Activated CD4-positive, alpha-beta T cell treated with anti-CD3 and anti-CD28 coated beads for 36 hours (primary cell): ENCODE measurements at regions of chr16 and their contacts with region 1.

Region 1: GRCh38 chr16:78778101-78779004 is 678.9 kb downstream of the WWOX start:
- DNase-seq: peak; percentile 77
- ATAC-seq: peak; percentile 66
- H3K4me3 Mint-ChIP-seq: peak overlapping the region; percentile 41
- H3K27ac Mint-ChIP-seq: peak overlapping the region; percentile 94
- H3K4me1 Mint-ChIP-seq: peaks cover 70% of the 10 kb centered on the region
- H3K27me3 Mint-ChIP-seq: no peaks in the 10 kb centered on the region

Region 2: DNA sequence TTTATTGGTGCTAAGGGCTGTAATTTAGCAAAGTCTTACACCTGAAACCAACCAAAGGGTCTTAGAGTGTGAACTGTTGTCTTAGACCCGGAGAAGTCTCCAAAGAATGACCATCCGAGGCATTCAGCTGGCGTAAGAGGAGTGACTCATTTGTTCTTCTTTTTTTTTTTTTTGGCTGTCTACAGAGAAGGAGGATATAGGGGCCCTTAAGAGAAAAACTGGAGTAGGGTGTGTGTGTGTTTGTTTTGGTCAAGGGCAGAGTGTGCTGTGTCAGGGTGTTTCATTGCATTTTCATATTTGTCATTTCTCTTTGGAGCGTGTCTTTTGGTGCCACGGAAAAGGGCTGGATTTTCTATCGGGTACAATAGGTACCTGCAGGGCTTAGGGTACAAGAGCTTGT is 170.9 kb before region 1 on chr16:
- CTCF ChIA-PET with region 1: no interaction called
- POLR2A ChIA-PET with region 1: no interaction called
- intact Hi-C with region 1: no loop called
- DNase-seq: no peak
- ATAC-seq: no peak
- H3K4me3 Mint-ChIP-seq: no peak overlapping the region
- H3K27ac Mint-ChIP-seq: no peak overlapping the region
- H3K4me1 Mint-ChIP-seq: peaks cover 4% of the 10 kb centered on the region
- H3K27me3 Mint-ChIP-seq: no peaks in the 10 kb centered on the region

Region 3: DNA sequence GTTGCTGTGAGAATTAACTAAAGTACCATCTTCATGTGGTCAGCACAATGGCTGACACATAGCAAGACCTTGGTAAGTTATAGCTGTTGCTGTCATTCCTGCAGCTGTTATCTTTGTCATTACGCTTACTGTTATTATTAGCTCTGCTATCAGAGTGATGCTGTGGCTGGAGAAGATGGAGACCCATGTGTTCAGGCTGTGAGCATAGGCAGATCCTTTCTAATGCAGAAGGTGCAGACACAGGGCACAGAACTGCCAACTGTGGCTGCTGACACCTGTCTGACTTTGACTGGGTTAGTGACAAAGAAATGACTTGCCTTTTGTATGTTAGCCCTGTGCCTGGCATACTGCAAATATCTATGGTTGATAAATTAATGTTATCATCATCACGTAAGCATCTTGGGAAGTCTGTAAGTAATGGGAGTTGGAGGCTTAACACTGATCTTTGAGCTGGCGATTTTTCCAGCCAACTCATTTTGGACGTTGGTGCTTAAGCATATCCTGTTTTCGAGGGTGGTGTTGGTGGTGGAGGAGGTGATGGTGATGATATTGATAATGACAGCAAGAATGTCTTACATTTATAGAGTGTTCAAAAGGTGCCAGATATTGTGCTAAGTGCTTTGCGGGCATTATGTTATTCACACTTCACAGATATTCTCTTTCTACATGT is 16.4 kb after region 1 on chr16:
- CTCF ChIA-PET with region 1: interaction called, 6 read pairs
- POLR2A ChIA-PET with region 1: interaction called, 8 read pairs
- intact Hi-C with region 1: loop called (anchors 1 kb)
- DNase-seq: peak; percentile 24
- ATAC-seq: peak; percentile 24
- H3K4me3 Mint-ChIP-seq: no peak overlapping the region
- H3K27ac Mint-ChIP-seq: peak overlapping the region; percentile 27
- H3K4me1 Mint-ChIP-seq: peaks cover 30% of the 10 kb centered on the region
- H3K27me3 Mint-ChIP-seq: no peaks in the 10 kb centered on the region

Region 4: GRCh38 chr16:78900044-78900811 is 121.9 kb after region 1 on chr16:
- CTCF ChIA-PET with region 1: interaction called, 8 read pairs
- POLR2A ChIA-PET with region 1: interaction called, 15 read pairs
- intact Hi-C with region 1: loop called (anchors 1 kb)
- DNase-seq: no peak
- ATAC-seq: peak; percentile 55
- H3K4me3 Mint-ChIP-seq: no peak overlapping the region
- H3K27ac Mint-ChIP-seq: peak overlapping the region; percentile 80
- H3K4me1 Mint-ChIP-seq: peaks cover 52% of the 10 kb centered on the region
- H3K27me3 Mint-ChIP-seq: no peaks in the 10 kb centered on the region

Region 5: GRCh38 chr16:79008036-79008868 is 229.9 kb after region 1 on chr16:
- CTCF ChIA-PET with region 1: interaction called, 3 read pairs
- POLR2A ChIA-PET with region 1: interaction called, 4 read pairs
- intact Hi-C with region 1: loop called in 1 of 2 experiments (anchors 1 kb)
- DNase-seq: peak; percentile 49
- ATAC-seq: peak; percentile 76
- H3K4me3 Mint-ChIP-seq: no peak overlapping the region
- H3K27ac Mint-ChIP-seq: peak overlapping the region; percentile 79
- H3K4me1 Mint-ChIP-seq: peaks cover 35% of the 10 kb centered on the region
- H3K27me3 Mint-ChIP-seq: no peaks in the 10 kb centered on the region

Region 6: GRCh38 chr16:79089735-79090284 is 311.5 kb after region 1 on chr16:
- CTCF ChIA-PET with region 1: no interaction called
- POLR2A ChIA-PET with region 1: no interaction called
- intact Hi-C with region 1: loop called in 1 of 2 experiments (anchors 5 kb)
- DNase-seq: peak; percentile 82
- ATAC-seq: peak; percentile 70
- H3K4me3 Mint-ChIP-seq: peak overlapping the region; percentile 66
- H3K27ac Mint-ChIP-seq: peak overlapping the region; percentile 95
- H3K4me1 Mint-ChIP-seq: peaks cover 57% of the 10 kb centered on the region
- H3K27me3 Mint-ChIP-seq: no peaks in the 10 kb centered on the region

Region 7: DNA sequence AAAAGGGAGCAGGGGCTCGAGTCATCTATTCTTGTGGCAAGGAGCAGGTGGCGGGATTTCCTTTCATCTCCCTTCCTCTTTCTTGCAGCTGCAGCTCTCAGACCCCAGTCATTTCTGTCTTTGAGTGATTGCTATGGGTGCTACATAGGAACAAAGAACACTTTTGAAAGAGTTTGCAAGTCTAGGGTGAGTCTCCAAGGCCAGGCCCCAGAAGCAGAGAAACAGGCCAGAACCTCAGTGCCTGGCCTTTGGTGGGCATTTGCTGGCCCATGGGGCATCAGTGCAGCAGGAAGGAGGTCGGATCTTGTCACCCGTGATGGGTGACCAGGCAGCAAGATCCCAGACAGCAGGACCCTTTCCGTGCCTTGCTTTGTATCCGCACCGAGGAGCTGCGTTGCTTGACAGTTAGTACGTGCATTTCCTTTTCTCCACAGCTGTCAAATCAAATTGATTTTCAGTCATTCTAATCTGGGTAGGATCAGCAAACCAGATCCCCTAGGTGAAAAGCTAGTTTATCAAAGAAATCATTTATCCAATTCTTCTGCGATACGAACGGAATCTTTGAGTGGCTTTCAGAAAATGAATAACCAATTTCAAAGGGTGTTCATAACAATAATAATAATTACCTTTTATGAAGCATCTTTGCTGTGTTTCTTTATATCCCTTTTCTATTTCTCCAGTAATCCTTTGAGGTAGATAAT is 1066.8 kb after region 1 on chr16:
- CTCF ChIA-PET with region 1: no interaction called
- POLR2A ChIA-PET with region 1: no interaction called
- intact Hi-C with region 1: loop called (anchors 5 to 10 kb)
- DNase-seq: peak; percentile 47
- ATAC-seq: peak; percentile 45
- H3K4me3 Mint-ChIP-seq: no peak overlapping the region
- H3K27ac Mint-ChIP-seq: peak overlapping the region; percentile 74
- H3K4me1 Mint-ChIP-seq: peaks cover 32% of the 10 kb centered on the region
- H3K27me3 Mint-ChIP-seq: peaks cover 10% of the 10 kb centered on the region